ENCODE measurements at regions of chr18 and their contacts with region 1.

Region 1: GRCh38 chr18:3703732-3704176 is 253.8 kb downstream of the TGIF1 start:
- DNase-seq: peak; percentile 65 to 86 (median 76)
- H3K4me3 ChIP-seq: no peak overlapping the region
- H3K27ac ChIP-seq: peak overlapping the region in 1 of 5 donors; percentile 19
- H3K4me1 ChIP-seq: peaks cover 0 to 10% of the 10 kb centered on the region in 2 donors
- H3K27me3 ChIP-seq: no peaks in the 10 kb centered on the region
- CTCF ChIP-seq: peak; percentile 49 to 89 (median 72)
- POLR2A ChIP-seq: no peak

Region 2: GRCh38 chr18:3760741-3761140 is 57.0 kb after region 1 on chr18:
- intact Hi-C with region 1: loop called in 1 of 2 experiments (anchors 10 kb)
- DNase-seq: no peak
- H3K4me3 ChIP-seq: no peak overlapping the region
- H3K27ac ChIP-seq: no peak overlapping the region
- H3K4me1 ChIP-seq: no peaks in the 10 kb centered on the region
- H3K27me3 ChIP-seq: no peaks in the 10 kb centered on the region
- CTCF ChIP-seq: no peak
- POLR2A ChIP-seq: no peak

Region 3: DNA sequence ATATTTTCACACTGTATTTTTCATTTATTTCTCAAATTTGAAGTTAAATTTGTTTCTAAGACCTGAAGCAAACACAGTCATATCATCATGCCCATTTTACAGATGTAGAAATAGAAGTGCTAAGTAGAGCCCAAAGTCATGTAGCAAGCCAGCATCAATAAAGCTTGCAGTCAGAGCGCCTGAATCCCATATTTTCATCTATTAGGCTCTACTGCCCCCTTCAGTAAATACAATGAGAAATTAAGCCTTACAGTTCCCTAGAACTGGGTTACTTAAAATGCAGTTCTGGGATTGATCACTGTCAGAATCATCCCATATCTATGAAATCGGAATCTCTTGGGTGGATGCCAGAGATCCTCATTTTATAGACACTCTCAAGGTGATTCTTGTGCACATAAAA is 166.1 kb after region 1 on chr18:
- intact Hi-C with region 1: loop called (anchors 5 to 10 kb)
- DNase-seq: peak in 2 of 7 donors; percentile 22 to 36
- H3K4me3 ChIP-seq: no peak overlapping the region
- H3K27ac ChIP-seq: no peak overlapping the region
- H3K4me1 ChIP-seq: peaks cover 0 to 2% of the 10 kb centered on the region in 2 donors
- H3K27me3 ChIP-seq: no peaks in the 10 kb centered on the region
- CTCF ChIP-seq: peak; percentile 23 to 77 (median 68)
- POLR2A ChIP-seq: no peak

Region 4: GRCh38 chr18:3983351-3983969 is 279.7 kb after region 1 on chr18:
- intact Hi-C with region 1: no loop called
- DNase-seq: peak in 1 of 7 donors; percentile 12
- H3K4me3 ChIP-seq: no peak overlapping the region
- H3K27ac ChIP-seq: no peak overlapping the region
- H3K4me1 ChIP-seq: peaks cover 0 to 17% of the 10 kb centered on the region in 2 donors
- H3K27me3 ChIP-seq: no peaks in the 10 kb centered on the region
- CTCF ChIP-seq: no peak
- POLR2A ChIP-seq: no peak

Region 5: DNA sequence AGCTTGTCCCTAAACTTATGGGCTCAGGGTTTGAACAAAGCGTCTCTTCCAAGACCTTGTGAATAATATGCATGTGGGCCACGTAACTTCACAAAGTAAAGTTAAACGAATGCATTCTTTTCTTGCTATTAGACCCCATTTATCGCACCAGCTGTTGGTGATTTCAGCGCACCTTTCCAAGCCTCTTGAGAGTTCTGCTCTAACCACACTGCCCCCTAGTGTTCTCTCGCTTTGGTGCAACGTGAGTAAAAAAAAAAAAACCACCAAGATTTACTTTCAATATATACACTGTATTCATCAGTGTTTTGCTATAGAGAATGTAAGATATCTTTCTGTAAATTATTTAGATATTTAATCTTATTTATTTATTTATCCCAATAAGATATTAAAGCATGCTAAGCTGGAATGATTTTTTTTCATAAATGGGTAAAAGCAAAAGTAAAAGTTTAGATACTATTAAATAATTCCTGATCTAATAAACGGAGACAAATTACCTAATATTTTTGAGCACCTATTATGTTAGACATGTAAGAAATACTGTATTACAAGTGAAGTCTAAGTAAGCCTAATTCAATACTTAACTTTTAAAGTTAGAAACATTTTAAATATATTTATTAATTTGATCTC is 291.8 kb after region 1 on chr18:
- intact Hi-C with region 1: loop called in 1 of 2 experiments (anchors 10 kb)
- DNase-seq: peak; percentile 54 to 80 (median 74)
- H3K4me3 ChIP-seq: peak overlapping the region in 1 of 4 donors; percentile 41
- H3K27ac ChIP-seq: peak overlapping the region in 1 of 5 donors; percentile 41
- H3K4me1 ChIP-seq: no peaks in the 10 kb centered on the region
- H3K27me3 ChIP-seq: no peaks in the 10 kb centered on the region
- CTCF ChIP-seq: peak; percentile 57 to 94 (median 82)
- POLR2A ChIP-seq: no peak

Measured in adrenal gland (tissue), 19 donors.